CD14-positive monocyte (primary cell): ENCODE measurements at regions of chr7 and their contacts with region 1.

Region 1: GRCh38 chr7:66493235-66494181 is 135.2 kb upstream of the KCTD7 start:
- DNase-seq: peak; percentile 98
- H3K4me3 ChIP-seq: peak overlapping the region; percentile 54 to 75 (median 73)
- H3K4me3 Mint-ChIP-seq: peak overlapping the region; percentile 80 to 89
- H3K27ac ChIP-seq: peak overlapping the region; percentile 83 to 97
- H3K27ac Mint-ChIP-seq: peak overlapping the region; percentile 97 to 99 (median 98)
- H3K4me1 ChIP-seq: peaks cover 13 to 23% of the 10 kb centered on the region in 2 donors
- H3K4me1 Mint-ChIP-seq: peaks cover 22% of the 10 kb centered on the region
- H3K27me3 ChIP-seq: no peaks in the 10 kb centered on the region
- H3K27me3 Mint-ChIP-seq: peaks cover 0 to 7% (median 2%) of the 10 kb centered on the region in 3 donors
- CTCF ChIP-seq: peak; percentile 24

Region 2: DNA sequence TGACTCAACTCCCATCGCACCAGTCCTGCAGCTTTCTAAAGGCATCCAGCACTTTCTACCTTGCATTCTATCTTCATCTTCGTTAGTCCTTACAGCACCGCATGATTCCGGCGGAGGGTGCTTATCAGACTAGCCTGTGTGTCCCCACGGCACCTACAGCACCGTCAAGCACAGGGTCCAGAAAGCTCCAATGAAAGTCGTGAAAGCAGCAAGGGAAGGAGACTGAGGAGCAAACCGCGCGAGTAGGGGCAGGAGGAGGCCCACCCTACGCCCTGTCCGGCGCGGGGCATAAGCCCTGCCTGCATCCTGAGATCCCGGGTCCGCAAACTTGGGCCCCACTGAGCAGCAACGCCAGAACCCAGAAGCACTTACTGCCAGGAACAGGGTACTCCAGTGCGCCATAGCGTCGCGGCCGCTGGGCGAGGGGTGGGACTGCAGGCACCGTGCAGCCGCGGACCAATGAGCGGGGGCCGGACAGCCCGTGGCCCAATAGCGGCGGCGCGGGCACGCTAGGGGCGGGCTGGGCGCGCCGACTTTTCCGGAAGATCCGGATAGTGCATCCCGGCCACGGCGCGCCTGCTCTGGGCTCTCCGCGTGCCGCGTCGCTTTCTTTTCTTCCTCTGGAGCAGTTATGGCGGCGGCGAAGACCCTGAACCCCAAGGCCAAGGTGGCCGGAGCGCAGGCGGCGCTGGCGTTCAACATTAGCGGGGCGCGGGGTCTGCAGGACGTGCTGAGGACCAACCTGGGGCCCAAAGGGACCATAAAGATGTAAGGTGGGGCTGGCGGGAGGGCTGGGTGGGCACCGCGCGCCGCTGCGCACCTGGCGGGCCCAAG is 742.8 kb before region 1 on chr7:
- intact Hi-C with region 1: loop called in 1 of 2 experiments (anchors 10 kb)
- DNase-seq: peak; percentile 81 to 90 (median 83)
- H3K4me3 ChIP-seq: peak overlapping the region; percentile 76 to 96 (median 89)
- H3K4me3 Mint-ChIP-seq: peak overlapping the region; percentile 87 to 98
- H3K27ac ChIP-seq: peak overlapping the region; percentile 51 to 90
- H3K27ac Mint-ChIP-seq: peak overlapping the region; percentile 89 to 94 (median 90)
- H3K4me1 ChIP-seq: peaks cover 11 to 12% of the 10 kb centered on the region in 2 donors
- H3K4me1 Mint-ChIP-seq: peaks cover 15% of the 10 kb centered on the region
- H3K27me3 ChIP-seq: no peaks in the 10 kb centered on the region
- H3K27me3 Mint-ChIP-seq: peaks cover 0 to 2% (median 0%) of the 10 kb centered on the region in 3 donors
- CTCF ChIP-seq: no peak

Region 3: GRCh38 chr7:66204822-66205740 is 288.4 kb before region 1 on chr7 and contains the start of gene TPST1:
- intact Hi-C with region 1: loop called in 1 of 2 experiments (anchors 10 kb)
- DNase-seq: peak; percentile 65 to 75 (median 68)
- H3K4me3 ChIP-seq: peak within 1 kb of the TSS; percentile 50 to 83 (median 79)
- H3K4me3 Mint-ChIP-seq: peak within 1 kb of the TSS; percentile 91 to 97
- H3K27ac ChIP-seq: peak within 1 kb of the TSS in 1 of 2 donors; percentile 26
- H3K27ac Mint-ChIP-seq: peak within 1 kb of the TSS in 6 of 7 donors; percentile 24 to 81 (median 52)
- H3K4me1 ChIP-seq: peaks cover 25 to 34% of the 10 kb centered on the region in 2 donors
- H3K4me1 Mint-ChIP-seq: peaks cover 36% of the 10 kb centered on the region
- H3K27me3 ChIP-seq: peaks cover 11 to 46% of the 10 kb centered on the region in 2 donors
- H3K27me3 Mint-ChIP-seq: peaks cover 38 to 69% (median 51%) of the 10 kb centered on the region in 3 donors
- CTCF ChIP-seq: peak; percentile 69
- polyA plus RNA-seq, gene TPST1: 0.54 to 4.8 (median 4.2) TPM